Aorta (tissue), 5 donors: ENCODE measurements at regions of chr19 and their contacts with region 1.

Region 1: GRCh38 chr19:45717166-45717982 is 13.3 kb downstream of the FBXO46 start:
- DNase-seq: peak; percentile 99
- ATAC-seq: peak; percentile 99
- H3K4me3 ChIP-seq: peak overlapping the region; percentile 35 to 64
- H3K27ac ChIP-seq: peak overlapping the region in 1 of 2 donors; percentile 77
- H3K4me1 ChIP-seq: no peaks in the 10 kb centered on the region
- H3K27me3 ChIP-seq: no peaks in the 10 kb centered on the region

Region 2: DNA sequence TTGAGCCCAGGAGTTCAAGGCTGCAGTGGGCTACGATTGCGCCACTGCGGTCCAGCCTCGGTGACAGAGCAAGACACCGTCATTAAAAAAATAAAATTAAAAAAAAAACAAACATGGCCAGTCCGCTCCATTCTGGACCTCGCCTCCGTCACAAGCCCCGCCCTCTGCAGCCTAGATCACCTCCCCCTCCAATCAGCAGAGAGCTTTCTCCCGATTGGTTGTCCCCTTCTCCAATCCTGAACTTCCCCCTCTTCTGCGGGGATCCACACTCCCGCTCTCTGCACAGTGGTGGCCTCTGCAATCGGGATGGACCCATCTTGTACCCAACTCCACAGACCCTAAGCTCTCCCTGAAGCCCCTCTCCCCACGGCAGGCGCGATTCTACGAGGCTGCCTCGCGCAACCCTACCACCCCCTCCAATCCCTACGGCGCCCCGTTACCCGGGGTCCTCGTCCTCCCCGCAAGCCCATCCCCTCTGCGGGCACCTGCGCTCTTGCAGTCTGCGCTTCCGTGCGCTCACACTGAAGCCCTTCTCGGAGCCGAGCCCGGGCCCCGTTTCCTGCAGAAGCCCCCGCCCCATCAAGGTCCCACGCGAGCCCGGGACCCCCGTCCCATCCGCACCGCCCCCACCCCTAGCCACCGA is 1330.5 kb after region 1 on chr19:
- intact Hi-C with region 1: loop called in 1 of 2 experiments (anchors 10 kb)
- DNase-seq: peak; percentile 93 to 94
- ATAC-seq: peak; percentile 94
- H3K4me3 ChIP-seq: peak overlapping the region; percentile 65 to 91
- H3K27ac ChIP-seq: peak overlapping the region in 1 of 2 donors; percentile 4
- H3K4me1 ChIP-seq: no peaks in the 10 kb centered on the region
- H3K27me3 ChIP-seq: no peaks in the 10 kb centered on the region